Heart right ventricle (tissue), 16 donors: ENCODE measurements at regions of chr19 and their contacts with region 1.

Region 1: DNA sequence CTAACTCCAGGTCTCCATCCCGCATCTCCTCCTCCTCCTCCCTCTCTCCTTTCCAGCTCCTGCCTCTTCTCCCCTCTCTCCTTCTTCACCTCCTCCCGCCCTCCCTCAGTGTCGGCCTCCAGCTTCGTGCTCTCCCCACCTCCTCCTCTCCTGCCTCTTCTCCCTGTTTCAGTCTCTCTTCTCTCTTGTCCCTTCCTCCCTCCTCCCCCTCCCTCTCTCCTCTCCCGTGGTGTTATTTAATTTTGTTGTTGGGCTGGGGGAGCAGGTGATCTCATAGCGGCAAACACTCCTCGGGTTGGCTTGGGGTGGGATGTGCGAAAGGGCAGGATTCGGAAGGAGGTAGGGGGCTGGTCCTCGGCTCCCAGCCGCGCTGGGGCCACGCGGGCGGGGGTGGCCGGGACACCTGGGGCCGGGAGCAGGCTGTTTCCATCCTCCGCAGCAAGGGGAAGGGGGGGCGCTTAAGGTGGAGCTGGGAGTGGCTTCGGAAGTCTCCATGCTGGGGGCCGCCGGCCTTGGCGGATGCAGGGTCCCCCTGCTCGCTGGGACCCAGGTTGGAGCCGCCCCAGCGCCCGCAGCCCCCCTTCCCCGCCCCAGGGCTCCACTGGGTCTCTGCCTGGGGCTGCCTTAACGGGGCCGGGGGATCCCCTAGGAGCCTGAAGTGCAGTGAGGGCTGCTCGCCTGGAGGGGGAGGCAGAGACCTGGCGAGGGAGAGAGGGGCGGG is at the start of gene CA11:
- DNase-seq: peak; percentile 91
- ATAC-seq: peak; percentile 87 to 92 (median 90)
- H3K4me3 ChIP-seq: peak within 1 kb of the TSS; percentile 33 to 65 (median 58)
- H3K27ac ChIP-seq: peak within 1 kb of the TSS in 9 of 10 donors; percentile 71 to 88 (median 79)
- H3K4me1 ChIP-seq: peaks cover 0 to 26% (median 16%) of the 10 kb centered on the region in 9 donors
- H3K27me3 ChIP-seq: no peaks in the 10 kb centered on the region
- CTCF ChIP-seq: peak; percentile 89 to 96 (median 92)
- total RNA-seq, gene CA11: 1.8 to 9.6 (median 3.8) TPM

Region 2: DNA sequence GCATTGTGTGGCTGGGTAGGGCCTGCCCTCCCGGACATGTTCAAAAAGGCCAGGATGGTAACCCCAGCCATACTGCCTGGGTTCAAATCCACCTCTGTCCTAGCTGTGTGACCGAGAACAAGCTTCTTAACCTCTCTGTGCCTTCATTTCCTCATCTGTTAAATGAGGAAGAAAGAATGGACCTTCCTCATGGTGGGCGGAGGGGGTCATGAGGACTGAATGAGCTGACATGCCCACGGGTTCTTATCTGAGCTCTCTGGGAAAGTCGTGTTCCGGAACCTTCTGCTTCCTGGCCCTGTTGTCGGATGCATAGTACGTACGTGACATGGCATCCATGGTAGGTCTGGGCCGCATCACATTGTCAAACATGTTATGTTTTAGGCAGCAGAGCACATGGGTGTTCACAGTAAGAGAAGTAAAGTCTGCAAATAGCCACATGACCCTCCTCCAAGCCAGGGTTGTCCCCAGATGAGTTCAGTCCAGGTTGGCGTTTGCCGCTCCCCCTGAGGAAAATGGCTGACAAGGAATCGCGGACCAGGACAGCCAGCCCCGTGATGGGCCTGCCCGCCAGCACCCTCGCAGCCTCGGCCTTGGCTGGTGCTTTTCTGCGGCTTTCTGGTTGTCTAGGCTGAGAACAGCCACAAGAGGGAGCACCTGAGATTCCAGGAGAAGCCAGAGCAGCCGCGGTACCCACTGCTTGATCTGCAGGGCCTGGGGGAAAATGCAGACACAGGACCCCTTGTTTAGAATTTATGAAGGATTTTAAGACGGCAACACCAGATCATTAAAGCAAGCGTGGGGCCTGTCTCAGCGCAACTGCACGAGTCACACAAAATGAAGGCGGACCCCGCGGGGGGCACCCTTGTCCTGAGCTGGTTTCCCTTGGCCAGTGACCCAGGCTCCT is 29.0 kb after region 1 on chr19:
- intact Hi-C with region 1: loop called in 1 of 10 experiments (anchors 2 kb)
- DNase-seq: peak; percentile 73 to 87
- ATAC-seq: peak; percentile 71 to 90 (median 86)
- H3K4me3 ChIP-seq: peak overlapping the region in 1 of 10 donors; percentile 10
- H3K27ac ChIP-seq: peak overlapping the region in 1 of 10 donors; percentile 7
- H3K4me1 ChIP-seq: peaks cover 0 to 10% (median 9%) of the 10 kb centered on the region in 9 donors
- H3K27me3 ChIP-seq: peaks cover 0 to 5% (median 0%) of the 10 kb centered on the region in 7 donors
- CTCF ChIP-seq: peak; percentile 79 to 91 (median 87)

Region 3: GRCh38 chr19:48780631-48781391 is 134.7 kb after region 1 on chr19:
- intact Hi-C with region 1: loop called in 5 of 10 experiments (anchors 5 to 10 kb)
- DNase-seq: no peak
- ATAC-seq: peak in 5 of 8 donors; percentile 3 to 31 (median 16)
- H3K4me3 ChIP-seq: no peak overlapping the region
- H3K27ac ChIP-seq: peak overlapping the region in 8 of 10 donors; percentile 55 to 74 (median 67)
- H3K4me1 ChIP-seq: peaks cover 0 to 35% (median 10%) of the 10 kb centered on the region in 9 donors
- H3K27me3 ChIP-seq: no peaks in the 10 kb centered on the region
- CTCF ChIP-seq: no peak

Region 4: DNA sequence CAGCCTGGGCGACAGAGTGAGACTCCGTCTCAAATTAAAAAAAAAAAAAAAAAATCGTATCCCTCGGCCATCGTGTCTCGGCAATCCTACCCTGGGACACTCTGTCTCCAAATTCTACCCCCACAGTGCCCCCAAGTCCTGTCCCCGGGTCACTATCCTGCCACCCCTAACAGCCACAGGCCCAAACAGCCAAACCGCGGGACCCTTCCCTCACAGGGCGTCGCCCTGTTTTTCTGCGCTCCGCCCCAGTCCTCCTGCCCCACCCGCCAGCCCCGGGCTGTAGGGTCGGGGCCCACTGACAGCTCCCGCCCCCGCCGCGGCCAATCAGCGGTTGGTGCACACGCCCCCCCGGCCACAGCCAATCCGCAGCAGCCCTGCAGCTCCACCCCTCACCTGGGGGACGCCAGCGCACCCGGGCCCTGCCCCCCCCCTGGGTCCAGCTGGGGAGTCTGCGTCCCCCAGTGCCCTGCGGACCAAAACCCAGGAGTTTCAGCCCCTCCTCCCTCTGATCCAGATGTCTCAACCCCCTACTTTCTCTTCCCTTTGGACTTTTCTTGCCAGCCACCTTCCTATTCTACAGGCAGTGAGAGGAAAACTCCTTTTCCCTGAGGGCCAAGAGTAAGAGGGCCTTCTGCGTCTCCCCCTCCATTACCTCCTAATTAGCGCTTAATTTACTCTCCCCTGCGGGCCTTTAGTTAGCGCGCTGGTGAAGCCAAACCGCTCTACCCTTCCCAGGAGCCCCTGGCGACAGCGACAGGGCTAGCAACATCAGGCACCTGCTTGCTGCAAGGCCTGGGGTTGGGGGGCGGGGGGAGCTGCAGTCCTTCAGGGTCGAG is 166.2 kb after region 1 on chr19:
- intact Hi-C with region 1: no loop called
- DNase-seq: peak; percentile 90 to 93
- ATAC-seq: peak; percentile 88 to 94 (median 92)
- H3K4me3 ChIP-seq: peak overlapping the region; percentile 27 to 86 (median 65)
- H3K27ac ChIP-seq: peak overlapping the region; percentile 63 to 94 (median 88)
- H3K4me1 ChIP-seq: peaks cover 5 to 38% (median 22%) of the 10 kb centered on the region in 9 donors
- H3K27me3 ChIP-seq: no peaks in the 10 kb centered on the region
- CTCF ChIP-seq: no peak

Region 5: DNA sequence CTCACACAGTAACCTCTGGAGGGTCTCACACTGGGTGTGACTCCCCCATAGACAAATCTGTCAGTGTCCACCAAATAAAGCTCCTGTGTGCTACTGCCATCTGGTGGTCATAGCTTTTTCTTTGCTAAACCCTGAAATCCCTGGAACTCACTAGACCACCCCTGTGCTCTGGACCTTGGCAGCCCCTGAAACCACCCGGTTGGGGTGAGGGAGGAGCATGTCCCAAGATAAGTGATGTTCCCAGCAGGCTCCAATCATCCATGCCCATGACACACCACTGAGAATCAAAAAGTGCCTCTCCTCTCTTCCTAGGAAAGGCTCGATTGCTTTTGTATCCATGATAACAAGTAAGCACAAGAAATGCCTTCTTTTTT is 196.6 kb after region 1 on chr19:
- intact Hi-C with region 1: loop called in 8 of 10 experiments (anchors 5 to 10 kb)
- DNase-seq: peak in 1 of 2 donors; percentile 60
- ATAC-seq: peak; percentile 21 to 68 (median 52)
- H3K4me3 ChIP-seq: no peak overlapping the region
- H3K27ac ChIP-seq: no peak overlapping the region
- H3K4me1 ChIP-seq: no peaks in the 10 kb centered on the region
- H3K27me3 ChIP-seq: no peaks in the 10 kb centered on the region
- CTCF ChIP-seq: peak; percentile 63 to 87 (median 79)

Region 6: DNA sequence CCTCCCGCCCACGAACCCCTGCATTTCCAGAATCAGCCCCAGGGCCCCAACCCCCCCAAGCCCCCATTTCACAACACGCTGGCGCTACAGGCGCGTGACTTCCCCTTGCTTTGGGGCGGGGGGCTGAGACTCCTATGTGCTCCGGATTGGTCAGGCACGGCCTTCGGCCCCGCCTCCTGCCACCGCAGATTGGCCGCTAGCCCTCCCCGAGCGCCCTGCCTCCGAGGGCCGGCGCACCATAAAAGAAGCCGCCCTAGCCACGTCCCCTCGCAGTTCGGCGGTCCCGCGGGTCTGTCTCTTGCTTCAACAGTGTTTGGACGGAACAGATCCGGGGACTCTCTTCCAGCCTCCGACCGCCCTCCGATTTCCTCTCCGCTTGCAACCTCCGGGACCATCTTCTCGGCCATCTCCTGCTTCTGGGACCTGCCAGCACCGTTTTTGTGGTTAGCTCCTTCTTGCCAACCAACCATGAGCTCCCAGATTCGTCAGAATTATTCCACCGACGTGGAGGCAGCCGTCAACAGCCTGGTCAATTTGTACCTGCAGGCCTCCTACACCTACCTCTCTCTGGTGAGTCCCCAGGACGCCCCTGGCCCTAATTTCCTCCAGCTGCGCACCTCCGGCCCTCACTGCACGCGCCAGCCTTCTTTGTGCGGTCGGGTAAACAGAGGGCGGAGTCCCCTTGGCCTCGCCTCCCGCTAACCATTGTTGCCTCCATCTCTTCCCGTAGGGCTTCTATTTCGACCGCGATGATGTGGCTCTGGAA is 319.1 kb after region 1 on chr19 and contains the start of gene FTL:
- intact Hi-C with region 1: loop called in 2 of 10 experiments (anchors 10 kb)
- DNase-seq: peak; percentile 98
- ATAC-seq: peak; percentile 84 to 94 (median 91)
- H3K4me3 ChIP-seq: peak within 1 kb of the TSS; percentile 65 to 100 (median 88)
- H3K27ac ChIP-seq: peak within 1 kb of the TSS; percentile 84 to 96 (median 89)
- H3K4me1 ChIP-seq: peaks cover 15 to 62% (median 55%) of the 10 kb centered on the region in 9 donors
- H3K27me3 ChIP-seq: no peaks in the 10 kb centered on the region
- CTCF ChIP-seq: no peak
- total RNA-seq, gene FTL: 450 to 3,518 (median 637) TPM